ENCODE measurements at regions of chr22 and their contacts with region 1.

Region 1: DNA sequence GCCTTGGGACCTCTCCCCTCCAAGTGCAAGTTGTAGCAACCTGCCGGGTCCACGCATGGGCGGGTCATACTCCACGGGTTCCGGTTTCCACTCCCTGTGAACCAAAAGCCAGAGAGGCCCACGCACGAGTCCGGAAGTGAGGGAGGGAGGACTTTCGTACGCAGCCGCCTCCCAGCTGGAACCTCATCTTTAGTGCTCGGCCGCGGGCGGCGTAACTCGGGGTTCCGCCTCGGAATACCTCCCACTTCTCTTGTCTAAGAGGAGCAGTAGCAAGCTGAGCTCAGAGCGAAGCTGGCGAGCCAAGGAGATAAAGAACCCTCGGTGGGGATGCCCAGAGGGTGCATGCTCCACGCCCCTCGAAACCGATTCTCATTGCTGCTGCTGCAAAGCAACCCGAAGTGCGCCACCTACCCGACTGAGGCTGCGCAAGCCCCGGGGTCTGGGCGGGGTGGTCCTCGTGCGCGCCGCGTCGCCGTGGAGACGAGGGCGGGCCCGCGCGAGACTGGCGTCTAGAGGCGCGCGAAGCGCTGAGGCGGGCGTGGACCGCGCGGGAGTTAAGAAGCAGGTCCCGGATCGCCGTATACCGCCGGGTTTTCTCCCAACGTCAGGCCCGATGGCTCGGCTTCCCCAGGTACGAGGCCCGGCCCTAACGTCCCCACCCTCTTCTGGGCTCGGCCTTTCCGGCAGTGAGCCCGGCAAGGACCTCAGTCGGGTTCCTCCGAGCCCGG is at the start of gene SFI1:
- DNase-seq: peak; percentile 93 to 98 (median 96)
- ATAC-seq: peak; percentile 78
- H3K4me3 ChIP-seq: peak within 1 kb of the TSS; percentile 100
- H3K4me3 Mint-ChIP-seq: peak within 1 kb of the TSS; percentile 82
- H3K27ac ChIP-seq: peak within 1 kb of the TSS; percentile 94 to 97
- H3K27ac Mint-ChIP-seq: peak within 1 kb of the TSS; percentile 97
- H3K4me1 ChIP-seq: peaks cover 64% of the 10 kb centered on the region
- H3K4me1 Mint-ChIP-seq: peaks cover 57% of the 10 kb centered on the region
- H3K27me3 ChIP-seq: no peaks in the 10 kb centered on the region
- H3K27me3 Mint-ChIP-seq: no peaks in the 10 kb centered on the region
- CTCF ChIP-seq: peak; percentile 37
- total RNA-seq, gene SFI1: 281 to 291 TPM

Region 2: DNA sequence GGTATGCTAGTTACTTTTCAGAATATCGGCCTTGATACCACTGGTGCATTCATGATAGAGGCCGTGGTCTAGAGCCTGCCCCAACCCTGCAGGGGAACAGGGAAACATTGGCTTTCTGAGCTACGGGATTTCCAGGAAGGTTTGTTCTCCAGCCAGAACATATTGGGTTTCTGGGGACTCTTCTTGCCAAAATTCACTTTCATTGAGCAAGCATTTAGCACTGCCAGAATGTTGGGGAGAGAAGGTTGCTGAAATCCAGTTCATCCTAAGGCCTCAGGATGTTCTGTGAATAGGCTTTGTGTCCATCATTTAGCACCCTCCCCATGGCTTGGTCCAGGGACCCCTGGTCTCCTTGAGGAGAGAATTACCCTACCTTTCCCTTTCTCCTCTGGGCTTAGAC is 60.0 kb before region 1 on chr22:
- CTCF ChIA-PET with region 1: no interaction called
- POLR2A ChIA-PET with region 1: no interaction called
- intact Hi-C with region 1: no loop called
- DNase-seq: no peak
- ATAC-seq: no peak
- H3K4me3 ChIP-seq: no peak overlapping the region
- H3K4me3 Mint-ChIP-seq: no peak overlapping the region
- H3K27ac ChIP-seq: no peak overlapping the region
- H3K27ac Mint-ChIP-seq: no peak overlapping the region
- H3K4me1 ChIP-seq: no peaks in the 10 kb centered on the region
- H3K4me1 Mint-ChIP-seq: no peaks in the 10 kb centered on the region
- H3K27me3 ChIP-seq: no peaks in the 10 kb centered on the region
- H3K27me3 Mint-ChIP-seq: no peaks in the 10 kb centered on the region
- CTCF ChIP-seq: no peak

Region 3: GRCh38 chr22:31481129-31481528 is 15.0 kb before region 1 on chr22:
- CTCF ChIA-PET with region 1: no interaction called
- POLR2A ChIA-PET with region 1: no interaction called
- intact Hi-C with region 1: loop called in 1 of 2 experiments (anchors 1 kb)
- DNase-seq: no peak
- ATAC-seq: no peak
- H3K4me3 ChIP-seq: no peak overlapping the region
- H3K4me3 Mint-ChIP-seq: no peak overlapping the region
- H3K27ac ChIP-seq: no peak overlapping the region
- H3K27ac Mint-ChIP-seq: no peak overlapping the region
- H3K4me1 ChIP-seq: no peaks in the 10 kb centered on the region
- H3K4me1 Mint-ChIP-seq: peaks cover 33% of the 10 kb centered on the region
- H3K27me3 ChIP-seq: no peaks in the 10 kb centered on the region
- H3K27me3 Mint-ChIP-seq: no peaks in the 10 kb centered on the region
- CTCF ChIP-seq: no peak

Region 4: GRCh38 chr22:31556627-31557203 is 60.5 kb after region 1 on chr22:
- CTCF ChIA-PET with region 1: no interaction called
- POLR2A ChIA-PET with region 1: interaction called, 3 read pairs
- intact Hi-C with region 1: loop called in 1 of 2 experiments (anchors 10 kb)
- DNase-seq: peak in 3 of 14 experiments; percentile 43 to 49 (median 44)
- ATAC-seq: peak; percentile 46
- H3K4me3 ChIP-seq: no peak overlapping the region
- H3K4me3 Mint-ChIP-seq: no peak overlapping the region
- H3K27ac ChIP-seq: no peak overlapping the region
- H3K27ac Mint-ChIP-seq: no peak overlapping the region
- H3K4me1 ChIP-seq: peaks cover 11% of the 10 kb centered on the region
- H3K4me1 Mint-ChIP-seq: peaks cover 12% of the 10 kb centered on the region
- H3K27me3 ChIP-seq: no peaks in the 10 kb centered on the region
- H3K27me3 Mint-ChIP-seq: no peaks in the 10 kb centered on the region
- CTCF ChIP-seq: peak; percentile 48

Measured in CD4-positive, alpha-beta T cell (primary cell).